MCF 10A (cell line): ENCODE measurements at regions of chr17 and their contacts with region 1.

Region 1: DNA sequence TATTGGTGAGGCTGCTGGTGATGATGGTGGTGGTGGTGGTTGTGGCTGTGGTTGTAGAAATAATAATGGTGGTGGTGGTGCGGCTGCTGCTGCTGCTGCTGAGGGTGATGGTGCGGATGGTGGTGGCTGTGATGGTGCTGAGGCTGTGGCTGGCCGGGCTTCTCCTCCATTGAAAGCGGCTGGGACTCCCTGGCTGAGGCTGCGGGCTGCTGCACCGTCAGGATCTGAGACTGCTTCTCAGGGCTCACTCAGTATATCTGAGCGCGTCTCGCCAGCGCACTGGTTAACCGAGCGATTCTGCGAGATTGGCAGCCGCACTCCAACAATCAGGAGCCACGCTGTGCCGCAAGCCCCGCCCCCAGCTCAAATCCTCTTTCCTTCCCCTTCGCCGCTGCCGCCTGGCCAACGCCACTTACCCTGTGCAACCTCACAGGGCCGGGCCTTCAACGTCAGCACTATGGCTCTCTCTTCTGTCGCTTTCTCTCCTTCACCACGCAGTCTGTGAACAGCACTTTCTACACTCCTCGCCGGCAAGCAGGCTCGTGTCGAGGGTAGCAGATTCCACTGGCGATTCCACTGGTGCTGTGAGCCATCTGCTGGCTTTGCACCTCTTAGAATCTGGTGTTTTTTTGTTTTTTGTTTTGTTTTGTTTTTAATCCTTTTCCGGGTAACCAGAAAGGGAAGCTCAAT is at the start of gene NUFIP2:
- DNase-seq: peak; percentile 98
- H3K4me3 Mint-ChIP-seq: peak within 1 kb of the TSS; percentile 99
- H3K27ac Mint-ChIP-seq: peak within 1 kb of the TSS; percentile 93
- H3K4me1 Mint-ChIP-seq: peaks cover 14% of the 10 kb centered on the region
- H3K27me3 Mint-ChIP-seq: no peaks in the 10 kb centered on the region
- CTCF ChIP-seq: no peak
- total RNA-seq, gene NUFIP2: 78.6 and 88.0 TPM in 2 replicates

Region 2: GRCh38 chr17:29148790-29149430 is 145.1 kb before region 1 on chr17:
- CTCF ChIA-PET with region 1: interaction called, 37 read pairs
- POLR2A ChIA-PET with region 1: interaction called, 83 read pairs
- intact Hi-C with region 1: loop called (anchors 1 kb)
- DNase-seq: peak; percentile 92
- H3K4me3 Mint-ChIP-seq: peak overlapping the region; percentile 61
- H3K27ac Mint-ChIP-seq: peak overlapping the region; percentile 85
- H3K4me1 Mint-ChIP-seq: peaks cover 60% of the 10 kb centered on the region
- H3K27me3 Mint-ChIP-seq: no peaks in the 10 kb centered on the region
- CTCF ChIP-seq: peak; percentile 98

Region 3: DNA sequence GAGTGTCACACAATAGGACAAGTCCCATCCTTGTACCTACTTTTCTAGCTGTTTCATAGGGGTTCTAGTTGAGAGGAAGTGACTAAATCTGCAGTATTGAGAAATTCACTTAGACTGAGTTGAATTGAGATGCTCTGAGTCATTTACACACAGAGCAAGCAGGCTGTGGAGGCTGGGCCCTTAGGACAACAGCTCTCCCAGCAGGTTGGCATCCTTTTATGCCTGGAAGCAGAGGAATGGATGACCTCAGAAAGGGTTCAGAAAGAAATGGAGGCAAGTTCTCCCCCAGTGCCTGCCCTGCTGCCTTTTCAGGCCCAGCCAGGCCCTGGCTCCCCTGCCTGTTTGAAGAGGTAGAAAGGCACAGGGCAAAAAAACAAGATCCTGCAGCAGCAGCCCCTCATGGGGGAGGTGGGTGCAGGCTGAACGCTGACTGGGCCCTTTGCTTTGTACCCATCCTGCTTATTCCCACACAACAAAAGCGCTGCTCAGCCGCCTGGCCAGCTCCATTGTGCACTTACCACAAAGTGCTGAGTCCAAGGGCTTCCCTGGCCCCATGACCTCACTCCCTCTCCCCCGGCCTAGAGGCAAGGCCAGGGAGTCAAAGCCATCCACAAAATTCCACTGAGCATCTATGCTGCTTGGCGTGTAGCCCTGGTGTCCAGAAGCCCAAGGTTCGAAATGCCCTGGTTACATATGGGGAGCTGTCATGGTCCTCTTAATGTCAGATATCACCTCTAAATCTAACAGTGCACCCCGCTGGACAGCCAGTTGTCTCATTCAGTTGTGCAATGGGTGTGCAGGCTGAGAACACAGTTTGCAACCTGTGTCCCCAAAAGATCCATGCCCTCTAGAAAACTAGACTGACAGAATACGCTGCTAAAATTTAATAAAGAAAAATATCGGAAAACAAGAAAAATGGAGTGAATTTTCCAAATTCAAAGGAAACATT is 52.7 kb before region 1 on chr17:
- CTCF ChIA-PET with region 1: interaction called, 9 read pairs
- POLR2A ChIA-PET with region 1: interaction called, 19 read pairs
- intact Hi-C with region 1: loop called (anchors 5 kb)
- DNase-seq: peak; percentile 97
- H3K4me3 Mint-ChIP-seq: no peak overlapping the region
- H3K27ac Mint-ChIP-seq: peak overlapping the region; percentile 75
- H3K4me1 Mint-ChIP-seq: peaks cover 32% of the 10 kb centered on the region
- H3K27me3 Mint-ChIP-seq: no peaks in the 10 kb centered on the region
- CTCF ChIP-seq: no peak

Region 4: DNA sequence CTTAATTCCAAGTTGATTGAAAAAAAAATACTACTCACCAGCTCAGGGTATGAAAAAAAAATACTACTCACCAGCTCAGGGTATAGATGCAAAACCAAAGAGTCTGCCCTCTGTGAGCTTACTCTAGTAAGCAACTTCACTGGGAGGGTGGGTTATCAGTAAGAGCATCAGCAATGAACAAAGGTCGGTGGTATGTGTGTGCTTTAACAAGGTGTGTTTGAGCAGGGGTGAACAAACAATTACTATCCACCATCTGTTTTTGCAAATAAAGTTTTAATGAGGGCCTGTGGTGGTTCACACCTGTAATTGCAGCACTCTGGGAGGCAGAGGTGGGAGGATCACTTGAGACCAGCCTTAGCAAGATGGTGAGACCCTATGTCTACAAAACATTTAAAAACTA is 20.1 kb before region 1 on chr17:
- CTCF ChIA-PET with region 1: interaction called, 7 read pairs
- POLR2A ChIA-PET with region 1: interaction called, 11 read pairs
- intact Hi-C with region 1: no loop called
- DNase-seq: no peak
- H3K4me3 Mint-ChIP-seq: no peak overlapping the region
- H3K27ac Mint-ChIP-seq: no peak overlapping the region
- H3K4me1 Mint-ChIP-seq: peaks cover 12% of the 10 kb centered on the region
- H3K27me3 Mint-ChIP-seq: no peaks in the 10 kb centered on the region
- CTCF ChIP-seq: no peak

Region 5: DNA sequence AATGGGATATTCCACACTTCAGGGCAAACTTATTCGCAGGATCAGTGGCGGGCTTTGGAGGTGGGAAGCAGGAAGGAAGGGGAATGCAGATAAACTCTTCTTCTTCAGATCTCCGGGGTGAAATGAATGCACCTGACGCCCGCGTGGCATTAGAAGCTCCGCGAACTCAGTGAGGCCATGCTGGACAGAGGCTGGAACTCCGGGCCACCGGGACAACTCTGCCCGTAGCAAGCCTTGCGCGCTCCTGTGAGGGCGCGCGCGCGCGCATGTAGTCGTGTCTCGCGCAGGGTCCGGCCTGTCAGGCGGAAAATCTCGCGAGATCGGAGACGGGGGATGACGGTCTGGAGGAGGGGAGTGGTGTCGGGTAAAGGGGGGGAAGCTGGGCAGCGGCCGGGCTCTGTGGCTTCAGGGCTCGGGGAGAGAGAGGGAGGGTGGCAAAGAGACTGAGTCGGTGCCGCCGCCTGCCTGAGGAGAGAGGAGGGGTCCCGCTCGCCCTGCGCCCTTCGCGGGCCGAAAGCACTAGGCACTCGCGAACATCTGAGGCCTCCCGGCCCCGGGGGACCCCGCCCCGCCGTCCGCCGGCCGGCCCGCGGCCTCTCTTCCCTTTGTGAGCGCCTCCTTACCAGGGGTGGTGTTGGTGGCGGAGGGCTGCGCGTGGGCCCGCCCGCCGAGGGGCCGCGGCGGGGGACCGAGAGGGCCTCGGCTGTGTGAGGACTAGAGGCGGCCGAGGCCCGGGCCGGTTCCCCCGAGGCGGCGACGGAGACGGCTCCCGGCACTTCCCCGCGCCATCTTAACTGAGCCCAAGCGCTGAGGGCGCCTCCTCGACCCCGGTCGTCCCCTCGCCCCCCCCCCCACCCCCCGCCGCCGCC is 96.2 kb after region 1 on chr17 and contains the start of gene TAOK1:
- CTCF ChIA-PET with region 1: no interaction called
- POLR2A ChIA-PET with region 1: interaction called, 24 read pairs
- intact Hi-C with region 1: no loop called
- DNase-seq: peak; percentile 98
- H3K4me3 Mint-ChIP-seq: peak within 1 kb of the TSS; percentile 96
- H3K27ac Mint-ChIP-seq: peak within 1 kb of the TSS; percentile 94
- H3K4me1 Mint-ChIP-seq: peaks cover 30% of the 10 kb centered on the region
- H3K27me3 Mint-ChIP-seq: no peaks in the 10 kb centered on the region
- CTCF ChIP-seq: no peak
- total RNA-seq, gene TAOK1: 68.7 and 84.2 TPM in 2 replicates